ENCODE measurements at regions of chr11 and their contacts with region 1.

Region 1: DNA sequence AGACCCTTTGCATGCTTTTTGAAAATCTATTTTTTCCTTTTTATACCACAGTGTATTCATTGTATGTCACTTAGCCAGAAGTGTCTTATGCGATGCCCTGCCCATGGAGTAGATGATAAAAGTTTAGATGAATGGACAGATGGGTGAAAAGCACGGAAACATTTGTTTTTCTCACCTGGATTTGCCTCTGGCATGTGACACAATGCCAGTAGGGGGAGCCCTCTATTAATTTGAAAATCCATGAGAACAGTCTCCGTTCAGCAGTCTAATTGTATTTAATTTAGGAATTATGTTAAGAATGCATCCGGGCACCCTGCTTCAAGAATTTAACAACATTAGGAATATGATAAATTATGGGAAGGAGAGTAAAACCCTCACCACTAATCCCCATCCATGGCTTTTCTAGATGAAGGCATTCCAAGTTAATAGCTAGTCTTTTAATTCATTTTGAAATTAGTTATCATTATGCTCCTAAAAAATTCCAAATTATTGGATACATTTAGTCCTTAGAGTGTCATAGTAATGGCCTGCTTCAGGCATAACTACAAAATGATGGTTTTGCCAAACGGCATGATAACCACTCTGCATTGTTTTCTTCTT is 55.3 kb upstream of the ALKBH3 start:
- DNase-seq: no peak
- ATAC-seq: no peak
- H3K4me3 ChIP-seq: no peak overlapping the region
- H3K27ac ChIP-seq: no peak overlapping the region
- H3K4me1 ChIP-seq: no peaks in the 10 kb centered on the region
- H3K27me3 ChIP-seq: no peaks in the 10 kb centered on the region
- CTCF ChIP-seq: peak; percentile 36 to 57 (median 41)
- EP300 ChIP-seq: no peak
- POLR2A ChIP-seq: no peak
- RAD21 ChIP-seq: no peak

Region 2: DNA sequence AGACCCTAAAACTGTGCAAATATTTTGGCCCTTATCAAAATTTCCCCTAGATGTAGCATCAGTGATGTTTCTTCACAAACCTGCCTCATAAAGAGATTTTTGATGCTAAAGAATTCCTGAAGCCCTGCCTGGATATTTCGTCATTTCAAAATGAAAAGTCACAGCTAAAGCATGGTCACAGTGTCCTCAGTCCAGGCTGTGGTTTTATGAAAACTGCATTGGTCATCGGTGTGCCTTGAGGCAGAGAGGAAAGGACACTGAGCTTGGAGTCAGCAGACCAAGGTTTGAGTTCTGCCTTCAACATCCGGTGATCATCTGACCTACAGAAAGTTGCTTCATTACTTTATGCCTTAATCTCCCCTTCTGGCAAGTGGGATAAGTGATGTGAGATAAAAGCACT is 20.5 kb after region 1 on chr11:
- CTCF ChIA-PET with region 1: interaction called, 45 read pairs
- POLR2A ChIA-PET with region 1: no interaction called
- RAD21 ChIA-PET with region 1: interaction called, 12 read pairs
- SMC1A ChIA-PET with region 1: interaction called, 17 read pairs
- in situ Hi-C with region 1: no loop called
- intact Hi-C with region 1: no loop called
- DNase-seq: no peak
- ATAC-seq: no peak
- H3K4me3 ChIP-seq: no peak overlapping the region
- H3K27ac ChIP-seq: no peak overlapping the region
- H3K4me1 ChIP-seq: no peaks in the 10 kb centered on the region
- H3K27me3 ChIP-seq: no peaks in the 10 kb centered on the region
- CTCF ChIP-seq: no peak
- EP300 ChIP-seq: no peak
- POLR2A ChIP-seq: no peak
- RAD21 ChIP-seq: no peak